T-cell (primary cell): ENCODE measurements at regions of chr20 and their contacts with region 1.

Region 1: DNA sequence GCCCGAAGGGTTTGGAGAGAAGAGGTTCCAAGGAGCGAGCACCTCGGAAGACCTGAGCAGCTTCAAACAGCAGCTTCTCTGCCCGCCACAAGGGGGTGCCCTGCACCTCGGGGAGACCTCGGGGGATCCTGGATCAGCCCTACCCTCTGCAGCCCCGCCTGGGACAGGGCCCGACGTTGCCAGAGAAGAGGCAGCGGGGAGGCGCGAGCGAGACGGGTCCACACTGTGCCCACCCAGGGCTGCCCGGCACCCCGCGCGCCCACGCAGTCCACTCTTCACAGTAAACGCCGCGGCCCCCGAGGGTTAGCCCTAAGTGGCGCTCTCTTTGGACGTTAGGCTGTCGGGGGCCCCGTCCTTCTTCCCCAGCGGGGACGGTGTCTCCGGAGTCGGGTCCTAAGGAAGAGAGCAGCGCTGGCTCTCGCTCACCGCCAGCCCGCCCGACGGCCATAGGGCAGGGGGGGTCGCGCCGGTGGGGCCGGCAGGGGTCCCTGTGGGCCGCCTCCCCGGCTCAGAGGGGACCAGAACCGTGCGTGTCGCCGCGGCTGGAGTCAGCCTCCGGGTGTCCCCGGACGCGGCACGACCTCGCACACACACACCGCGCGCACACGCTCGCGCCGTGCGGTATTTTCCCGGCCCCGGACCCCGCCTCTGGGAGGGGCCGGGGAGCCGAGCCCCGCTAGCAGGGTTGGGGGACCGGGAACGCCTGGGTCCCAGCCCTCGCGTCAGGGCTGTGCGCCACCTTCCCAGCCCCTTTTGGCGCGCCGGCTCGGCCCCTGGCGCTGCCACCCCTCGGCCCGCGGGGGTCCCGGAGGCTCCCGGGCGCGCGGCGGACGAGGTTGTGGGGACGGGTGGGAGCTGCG is 929 bp downstream of the CDH22 start:
- DNase-seq: peak; percentile 46 to 83 (median 68)
- ATAC-seq: peak; percentile 79 to 88 (median 84)
- H3K4me3 ChIP-seq: peak overlapping the region; percentile 37 to 52
- H3K4me3 Mint-ChIP-seq: peak overlapping the region; percentile 42 to 73 (median 49)
- H3K27ac ChIP-seq: no peak overlapping the region
- H3K27ac Mint-ChIP-seq: no peak overlapping the region
- H3K4me1 ChIP-seq: peaks cover 0 to 17% of the 10 kb centered on the region in 2 experiments
- H3K4me1 Mint-ChIP-seq: peaks cover 8 to 25% (median 19%) of the 10 kb centered on the region in 3 donors
- H3K27me3 ChIP-seq: peaks cover 18 to 90% of the 10 kb centered on the region in 2 experiments
- H3K27me3 Mint-ChIP-seq: peaks cover 67 to 80% of the 10 kb centered on the region in 2 donors

Region 2: DNA sequence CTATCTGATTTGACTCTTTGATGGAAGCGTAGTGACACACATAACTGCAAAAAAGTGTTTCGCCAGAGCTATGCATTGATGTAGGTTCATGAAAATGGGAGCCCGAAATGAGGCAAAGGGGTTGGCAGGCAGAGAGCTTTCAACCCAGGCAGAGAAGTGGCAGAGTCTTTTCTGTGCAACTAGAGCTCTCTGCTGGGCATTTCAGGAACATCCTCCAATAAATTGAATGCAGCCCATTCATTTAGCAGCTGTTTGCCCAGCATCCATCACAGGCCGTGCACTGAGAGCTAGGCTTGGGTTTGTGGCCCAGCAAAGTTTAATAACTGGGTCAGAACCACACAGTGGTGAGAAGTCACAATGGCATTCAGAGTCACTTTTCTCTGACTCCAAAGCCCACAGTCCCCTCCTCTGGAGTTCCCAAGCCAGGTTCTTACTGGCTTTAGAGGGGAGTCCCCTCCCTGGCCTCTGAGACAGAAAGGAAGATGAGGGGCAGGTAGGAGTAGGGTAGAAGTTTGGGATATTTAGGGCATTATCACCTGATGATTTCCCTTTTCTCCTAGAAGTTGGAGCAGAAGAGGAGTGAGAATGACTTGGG is 130.9 kb after region 1 on chr20:
- CTCF ChIA-PET with region 1: interaction called, 3 to 10 read pairs
- POLR2A ChIA-PET with region 1: no interaction called
- DNase-seq: peak in 15 of 35 experiments; percentile 4 to 49 (median 9)
- ATAC-seq: peak in 2 of 4 experiments; percentile 32 to 40
- H3K4me3 ChIP-seq: no peak overlapping the region
- H3K4me3 Mint-ChIP-seq: no peak overlapping the region
- H3K27ac ChIP-seq: no peak overlapping the region
- H3K27ac Mint-ChIP-seq: no peak overlapping the region
- H3K4me1 ChIP-seq: no peaks in the 10 kb centered on the region
- H3K4me1 Mint-ChIP-seq: no peaks in the 10 kb centered on the region
- H3K27me3 ChIP-seq: peaks cover 0 to 19% of the 10 kb centered on the region in 2 experiments
- H3K27me3 Mint-ChIP-seq: peaks cover 31 to 36% of the 10 kb centered on the region in 2 donors